ENCODE measurements at regions of chr2 and their contacts with region 1.

Region 1: DNA sequence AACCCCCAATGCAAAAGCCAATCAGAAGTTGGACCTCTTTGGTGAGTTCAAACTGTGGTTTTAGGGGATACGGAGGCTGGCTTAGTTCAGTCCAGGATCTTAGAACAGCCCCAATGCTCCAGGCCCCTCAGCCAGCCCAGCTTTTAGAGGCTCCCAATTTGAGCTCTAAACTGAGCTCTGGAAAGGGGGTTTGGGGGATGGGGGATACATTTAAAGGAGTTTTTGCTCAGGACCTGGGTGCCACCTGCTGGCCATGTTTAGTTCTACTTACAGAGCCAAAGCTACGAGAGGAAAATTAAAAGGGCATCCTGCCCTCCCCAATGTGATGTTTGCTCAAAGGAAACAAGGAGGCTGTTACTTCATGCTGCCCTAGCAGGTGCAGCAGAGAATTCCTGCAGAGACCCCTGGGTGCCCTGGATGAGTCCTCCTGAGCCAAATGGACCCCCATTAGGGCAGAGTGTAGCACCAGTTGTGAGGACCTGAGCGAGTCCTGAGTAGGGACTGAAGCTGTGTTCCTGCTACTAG is 15.9 kb upstream of the TMEM214 start:
- DNase-seq: peak; percentile 61 to 85
- H3K4me3 ChIP-seq: no peak overlapping the region
- H3K27ac ChIP-seq: no peak overlapping the region
- H3K4me1 ChIP-seq: peaks cover 3 to 6% (median 5%) of the 10 kb centered on the region in 4 experiments; a peak in 6 of 7 replicates
- H3K27me3 ChIP-seq: no peaks in the 10 kb centered on the region; a peak in 2 of 7 replicates
- CTCF ChIP-seq: peak in 2 of 3 experiments; percentile 80 to 83; a peak in 3 of 4 replicates
- EP300 ChIP-seq: peak in 1 of 2 experiments; percentile 39; a peak in 1 of 3 replicates
- POLR2A ChIP-seq: no peak
- RAD21 ChIP-seq: peak; percentile 91 to 92

Region 2: GRCh38 chr2:26933431-26934334 is 83.2 kb before region 1 on chr2:
- CTCF ChIA-PET with region 1: interaction called, 63 read pairs
- POLR2A ChIA-PET with region 1: no interaction called
- DNase-seq: no peak
- H3K4me3 ChIP-seq: no peak overlapping the region
- H3K27ac ChIP-seq: no peak overlapping the region
- H3K4me1 ChIP-seq: peaks cover 0 to 4% (median 1%) of the 10 kb centered on the region in 4 experiments; a peak in 4 of 7 replicates
- H3K27me3 ChIP-seq: no peaks in the 10 kb centered on the region; a peak in 2 of 7 replicates
- CTCF ChIP-seq: peak in 1 of 3 experiments; percentile 15; a peak in 1 of 4 replicates
- EP300 ChIP-seq: no peak
- POLR2A ChIP-seq: no peak
- RAD21 ChIP-seq: no peak; a peak in 1 of 4 replicates

Region 3: DNA sequence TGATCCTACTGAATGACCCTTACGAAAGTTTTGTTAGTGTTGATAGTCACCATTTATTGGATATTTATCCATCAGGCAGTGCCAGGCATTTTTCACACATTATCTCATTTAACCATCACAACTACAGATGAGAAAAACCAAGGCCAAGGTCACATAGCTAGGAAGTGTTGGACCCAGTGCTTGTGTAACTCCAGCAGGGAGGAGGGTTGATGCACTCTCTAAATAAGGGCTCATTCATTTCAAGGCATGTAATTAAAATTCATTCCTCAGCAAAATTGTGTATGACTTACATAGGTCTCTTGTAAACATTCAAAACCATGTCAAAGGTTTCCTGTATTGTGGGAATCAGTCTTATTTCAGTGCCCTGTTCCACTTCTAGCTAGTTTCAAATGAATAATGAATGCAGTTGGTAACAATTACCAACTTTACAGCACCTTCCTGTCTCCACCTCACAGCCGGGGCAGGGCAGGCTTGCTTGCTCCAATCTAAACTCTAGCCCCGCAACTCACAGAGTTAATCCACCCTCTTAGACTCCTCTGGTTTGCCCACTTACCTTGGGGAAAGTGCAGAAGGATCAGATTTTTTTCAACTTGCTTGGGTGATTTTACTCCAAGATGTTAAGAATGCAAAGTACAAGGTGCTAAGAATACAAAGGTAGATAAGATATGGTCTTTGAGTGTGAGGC is 52.3 kb before region 1 on chr2:
- CTCF ChIA-PET with region 1: interaction called, 416 read pairs
- POLR2A ChIA-PET with region 1: interaction called, 18 read pairs
- DNase-seq: no peak
- H3K4me3 ChIP-seq: no peak overlapping the region
- H3K27ac ChIP-seq: no peak overlapping the region
- H3K4me1 ChIP-seq: peaks cover 0 to 2% (median 0%) of the 10 kb centered on the region in 4 experiments; a peak in 1 of 7 replicates
- H3K27me3 ChIP-seq: peaks cover 0 to 9% (median 3%) of the 10 kb centered on the region in 4 experiments; a peak in 4 of 7 replicates
- CTCF ChIP-seq: no peak
- EP300 ChIP-seq: no peak
- POLR2A ChIP-seq: no peak
- RAD21 ChIP-seq: no peak

Region 4: GRCh38 chr2:26982102-26982742 is 34.6 kb before region 1 on chr2:
- CTCF ChIA-PET with region 1: interaction called, 36 read pairs
- POLR2A ChIA-PET with region 1: no interaction called
- DNase-seq: no peak
- H3K4me3 ChIP-seq: no peak overlapping the region
- H3K27ac ChIP-seq: no peak overlapping the region
- H3K4me1 ChIP-seq: no peaks in the 10 kb centered on the region
- H3K27me3 ChIP-seq: no peaks in the 10 kb centered on the region
- CTCF ChIP-seq: peak in 2 of 3 experiments; percentile 35 to 58; a peak in 3 of 4 replicates
- EP300 ChIP-seq: no peak
- POLR2A ChIP-seq: no peak
- RAD21 ChIP-seq: no peak; a peak in 1 of 4 replicates

Region 5: GRCh38 chr2:26993768-26994167 is 23.1 kb before region 1 on chr2:
- CTCF ChIA-PET with region 1: interaction called, 22 read pairs
- POLR2A ChIA-PET with region 1: no interaction called
- DNase-seq: no peak
- H3K4me3 ChIP-seq: no peak overlapping the region
- H3K27ac ChIP-seq: no peak overlapping the region
- H3K4me1 ChIP-seq: no peaks in the 10 kb centered on the region
- H3K27me3 ChIP-seq: no peaks in the 10 kb centered on the region
- CTCF ChIP-seq: no peak
- EP300 ChIP-seq: no peak
- POLR2A ChIP-seq: no peak
- RAD21 ChIP-seq: no peak